IMR-90 (cell line): ENCODE measurements at regions of chrX and their contacts with region 1.

Region 1: GRCh38 chrX:141142946-141143345 is 34.0 kb downstream of the LDOC1 start:
- DNase-seq: no peak
- ATAC-seq: no peak
- H3K4me3 ChIP-seq: no peak overlapping the region
- H3K27ac ChIP-seq: no peak overlapping the region
- H3K4me1 ChIP-seq: no peaks in the 10 kb centered on the region
- H3K27me3 ChIP-seq: no peaks in the 10 kb centered on the region
- CTCF ChIP-seq: no peak
- POLR2A ChIP-seq: no peak
- RAD21 ChIP-seq: no peak

Region 2: DNA sequence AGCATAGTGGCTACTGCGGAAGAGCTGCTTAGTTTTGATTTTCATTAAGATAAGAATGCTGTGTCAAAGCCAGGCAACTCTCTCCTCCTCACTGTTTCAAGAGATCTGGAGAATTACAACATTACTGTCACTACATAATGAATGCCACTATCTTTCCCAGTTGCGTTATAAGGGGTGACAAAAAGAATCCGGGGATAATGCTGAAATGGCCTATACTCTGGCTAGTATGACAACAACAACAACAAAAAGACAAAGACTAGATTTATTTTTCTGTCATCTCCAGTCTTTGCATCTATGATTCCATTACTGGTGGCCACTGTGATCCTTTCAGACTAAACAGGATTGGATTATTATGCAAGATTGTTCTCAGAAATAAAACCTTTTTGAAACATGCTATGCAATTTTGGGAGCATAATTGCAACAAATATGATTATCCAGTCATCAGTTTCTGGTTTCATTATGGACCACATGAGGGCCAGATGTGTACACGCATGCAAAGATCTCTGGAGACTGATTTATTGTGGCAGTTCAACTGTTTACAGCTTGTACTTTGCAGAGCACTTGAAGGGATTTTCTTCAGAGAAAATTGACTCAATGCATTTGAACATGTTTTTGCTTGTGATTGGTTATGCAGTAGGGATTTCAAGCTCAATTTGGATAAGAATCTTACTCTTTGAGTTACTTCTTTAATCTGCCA is 171.7 kb before region 1 on chrX:
- CTCF ChIA-PET with region 1: no interaction called
- POLR2A ChIA-PET with region 1: no interaction called
- dilution Hi-C with region 1: no loop called
- in situ Hi-C with region 1: loop called (anchors 25 kb)
- intact Hi-C with region 1: no loop called
- DNase-seq: no peak
- ATAC-seq: no peak
- H3K4me3 ChIP-seq: no peak overlapping the region
- H3K27ac ChIP-seq: no peak overlapping the region
- H3K4me1 ChIP-seq: no peaks in the 10 kb centered on the region
- H3K27me3 ChIP-seq: no peaks in the 10 kb centered on the region
- CTCF ChIP-seq: no peak
- POLR2A ChIP-seq: no peak
- RAD21 ChIP-seq: no peak